Caco-2 (cell line): ENCODE measurements at regions of chr3 and their contacts with region 1.

Region 1: DNA sequence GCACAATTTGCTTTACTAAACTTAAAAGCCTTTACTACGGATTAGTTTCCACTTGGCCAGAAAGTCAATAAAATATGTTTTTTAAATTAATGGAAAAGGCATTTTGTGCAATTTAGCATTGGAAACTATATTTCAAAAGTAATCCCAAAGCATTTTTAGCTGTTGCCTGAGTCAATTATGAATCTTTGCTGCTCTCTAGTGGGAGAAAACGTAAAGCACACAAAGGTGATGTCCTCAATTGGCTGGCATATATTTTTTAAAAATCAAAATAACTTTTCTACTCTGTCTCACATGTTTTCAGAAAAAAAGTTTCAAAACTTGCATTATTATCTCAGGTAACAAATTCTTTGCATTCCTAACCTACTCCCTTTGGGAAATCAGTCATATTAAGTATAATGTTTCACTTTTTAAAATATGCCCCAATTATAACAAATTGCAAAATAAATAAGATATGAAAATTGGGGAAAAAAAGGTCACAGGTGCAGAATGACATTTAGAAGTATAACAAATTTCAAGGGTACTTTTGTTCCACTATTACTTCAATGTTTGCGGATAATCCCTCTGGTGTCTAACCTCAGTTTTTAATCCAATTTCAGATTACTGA is 47.2 kb upstream of the TEX55 start:
- DNase-seq: peak in 1 of 2 experiments; percentile 49
- H3K4me3 ChIP-seq: no peak overlapping the region
- H3K4me3 Mint-ChIP-seq: no peak overlapping the region
- H3K27ac Mint-ChIP-seq: no peak overlapping the region
- H3K4me1 ChIP-seq: no peaks in the 10 kb centered on the region
- H3K4me1 Mint-ChIP-seq: no peaks in the 10 kb centered on the region
- H3K27me3 ChIP-seq: no peaks in the 10 kb centered on the region
- H3K27me3 Mint-ChIP-seq: peaks cover 5% of the 10 kb centered on the region
- CTCF ChIP-seq: peak; percentile 65 to 68

Region 2: GRCh38 chr3:118884748-118885206 is 213.9 kb before region 1 on chr3:
- CTCF ChIA-PET with region 1: interaction called, 50 read pairs
- POLR2A ChIA-PET with region 1: no interaction called
- intact Hi-C with region 1: loop called (anchors 1 kb)
- DNase-seq: peak; percentile 57 to 73
- H3K4me3 ChIP-seq: no peak overlapping the region
- H3K4me3 Mint-ChIP-seq: no peak overlapping the region
- H3K27ac Mint-ChIP-seq: no peak overlapping the region
- H3K4me1 ChIP-seq: no peaks in the 10 kb centered on the region
- H3K4me1 Mint-ChIP-seq: no peaks in the 10 kb centered on the region
- H3K27me3 ChIP-seq: no peaks in the 10 kb centered on the region; the same call in 1 of the 2 replicates
- H3K27me3 Mint-ChIP-seq: peaks cover 22% of the 10 kb centered on the region
- CTCF ChIP-seq: peak; percentile 87 to 93